Panc1 (cell line): ENCODE measurements at regions of chr5 and their contacts with region 1.

Region 1: GRCh38 chr5:17132444-17133083 is 84.9 kb upstream of the BASP1 start:
- DNase-seq: no peak
- ATAC-seq: no peak
- H3K4me3 ChIP-seq: no peak overlapping the region
- H3K27ac ChIP-seq: no peak overlapping the region
- H3K4me1 ChIP-seq: peaks cover 12% of the 10 kb centered on the region
- H3K27me3 ChIP-seq: no peaks in the 10 kb centered on the region
- CTCF ChIP-seq: peak; percentile 79

Region 2: DNA sequence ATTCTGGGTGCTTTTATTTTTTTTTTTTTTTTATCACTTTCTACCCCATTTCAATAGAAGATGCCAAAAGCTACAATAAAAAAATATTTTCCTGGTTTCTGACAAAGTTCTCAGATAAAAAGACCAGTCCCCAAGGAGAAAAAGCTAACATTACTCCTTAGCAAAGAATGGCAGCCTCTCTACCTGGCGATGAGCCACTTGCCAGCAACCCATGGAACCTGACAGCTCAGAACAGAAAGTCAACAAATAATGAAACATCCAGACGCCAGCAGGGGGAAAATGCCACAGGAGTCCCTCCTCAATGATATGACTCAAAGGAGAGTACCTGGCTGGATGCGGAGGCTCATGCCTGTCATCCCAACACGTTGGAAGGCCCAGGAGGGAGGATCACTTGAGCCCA is 319.7 kb before region 1 on chr5:
- CTCF ChIA-PET with region 1: interaction called, 10 read pairs
- POLR2A ChIA-PET with region 1: no interaction called
- in situ Hi-C with region 1: no loop called
- intact Hi-C with region 1: no loop called
- DNase-seq: peak; percentile 33
- ATAC-seq: peak; percentile 61; the same call in 1 of the 2 replicates
- H3K4me3 ChIP-seq: no peak overlapping the region
- H3K27ac ChIP-seq: no peak overlapping the region
- H3K4me1 ChIP-seq: peaks cover 30% of the 10 kb centered on the region
- H3K27me3 ChIP-seq: no peaks in the 10 kb centered on the region
- CTCF ChIP-seq: no peak

Region 3: GRCh38 chr5:16934123-16934522 is 198.4 kb before region 1 on chr5:
- CTCF ChIA-PET with region 1: interaction called, 12 read pairs
- POLR2A ChIA-PET with region 1: no interaction called
- in situ Hi-C with region 1: loop called (anchors 25 kb)
- intact Hi-C with region 1: loop called (anchors 5 kb)
- DNase-seq: peak; percentile 77
- ATAC-seq: peak; percentile 76
- H3K4me3 ChIP-seq: peak overlapping the region; percentile 96 to 97
- H3K27ac ChIP-seq: peak overlapping the region; percentile 91
- H3K4me1 ChIP-seq: peaks cover 43% of the 10 kb centered on the region
- H3K27me3 ChIP-seq: peaks cover 9% of the 10 kb centered on the region
- CTCF ChIP-seq: peak; percentile 97